ENCODE measurements at regions of chr14 and their contacts with region 1.

Region 1: GRCh38 chr14:81971911-81972310 is 438.3 kb upstream of the SEL1L start:
- DNase-seq: no peak
- H3K4me3 ChIP-seq: no peak overlapping the region
- H3K27ac ChIP-seq: no peak overlapping the region
- H3K4me1 ChIP-seq: no peaks in the 10 kb centered on the region
- H3K27me3 ChIP-seq: no peaks in the 10 kb centered on the region
- CTCF ChIP-seq: no peak
- EP300 ChIP-seq: no peak
- POLR2A ChIP-seq: no peak

Region 2: DNA sequence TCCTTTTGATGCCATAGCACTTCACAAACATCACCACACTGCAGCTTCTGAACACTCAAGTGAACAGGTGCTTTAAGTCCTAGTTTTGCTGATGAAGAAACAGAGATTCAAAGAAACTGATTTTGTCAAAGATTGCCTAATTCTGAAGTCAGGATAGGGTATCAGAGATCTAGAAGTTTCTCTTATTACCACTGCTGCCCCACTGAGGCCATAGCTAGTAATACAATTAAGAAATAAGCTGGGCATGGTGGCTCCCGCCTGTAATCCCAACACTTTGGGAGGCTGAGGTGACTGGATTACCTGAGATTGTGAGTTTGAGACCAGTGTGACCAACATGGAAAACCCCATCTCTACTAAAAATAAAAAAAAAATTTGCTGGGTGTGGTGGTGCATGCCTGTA is 20.1 kb after region 1 on chr14:
- intact Hi-C with region 1: loop called in 1 of 4 experiments (anchors 1 kb)
- DNase-seq: no peak
- H3K4me3 ChIP-seq: no peak overlapping the region
- H3K27ac ChIP-seq: no peak overlapping the region
- H3K4me1 ChIP-seq: no peaks in the 10 kb centered on the region
- H3K27me3 ChIP-seq: no peaks in the 10 kb centered on the region
- CTCF ChIP-seq: no peak
- EP300 ChIP-seq: no peak
- POLR2A ChIP-seq: no peak

Measured in ovary (tissue), 10 donors.